Mammary epithelial cell (primary cell): ENCODE measurements at regions of chr3 and their contacts with region 1.

Region 1: DNA sequence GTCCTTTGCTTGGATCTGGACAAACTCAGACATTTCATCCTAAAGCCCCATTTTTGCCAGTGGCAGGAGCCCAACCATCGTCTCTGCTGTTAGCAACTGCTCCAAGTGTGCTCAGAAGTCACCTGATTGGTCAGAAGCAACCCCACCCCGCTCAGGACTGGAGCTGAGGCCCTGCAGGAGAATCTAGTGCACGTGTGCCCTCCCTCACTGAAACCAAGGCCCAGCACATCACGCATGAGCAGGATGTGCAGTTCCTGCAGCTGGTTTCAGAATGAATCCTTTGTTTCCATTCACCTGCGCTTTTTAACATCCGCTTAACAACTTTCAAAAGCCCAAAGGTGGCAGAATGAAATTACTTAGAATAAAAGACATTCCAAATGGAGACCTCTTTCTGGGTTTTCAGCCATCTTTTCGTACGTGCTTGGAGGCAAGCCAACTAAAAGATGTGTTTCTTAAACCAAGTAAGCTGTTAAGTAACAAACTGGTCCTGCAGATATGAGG is 81.2 kb downstream of the SRGAP3 start:
- DNase-seq: peak; percentile 70
- H3K4me3 ChIP-seq: no peak overlapping the region
- H3K27ac ChIP-seq: peak overlapping the region; percentile 96
- H3K4me1 ChIP-seq: peaks cover 56% of the 10 kb centered on the region
- H3K27me3 ChIP-seq: no peaks in the 10 kb centered on the region
- CTCF ChIP-seq: no peak

Region 2: GRCh38 chr3:8524249-8524648 is 644.0 kb before region 1 on chr3:
- CTCF ChIA-PET with region 1: no interaction called
- dilution Hi-C with region 1: no loop called
- in situ Hi-C with region 1: no loop called
- intact Hi-C with region 1: no loop called
- DNase-seq: peak; percentile 36
- H3K4me3 ChIP-seq: no peak overlapping the region
- H3K27ac ChIP-seq: no peak overlapping the region
- H3K4me1 ChIP-seq: peaks cover 9% of the 10 kb centered on the region
- H3K27me3 ChIP-seq: no peaks in the 10 kb centered on the region
- CTCF ChIP-seq: no peak

Region 3: DNA sequence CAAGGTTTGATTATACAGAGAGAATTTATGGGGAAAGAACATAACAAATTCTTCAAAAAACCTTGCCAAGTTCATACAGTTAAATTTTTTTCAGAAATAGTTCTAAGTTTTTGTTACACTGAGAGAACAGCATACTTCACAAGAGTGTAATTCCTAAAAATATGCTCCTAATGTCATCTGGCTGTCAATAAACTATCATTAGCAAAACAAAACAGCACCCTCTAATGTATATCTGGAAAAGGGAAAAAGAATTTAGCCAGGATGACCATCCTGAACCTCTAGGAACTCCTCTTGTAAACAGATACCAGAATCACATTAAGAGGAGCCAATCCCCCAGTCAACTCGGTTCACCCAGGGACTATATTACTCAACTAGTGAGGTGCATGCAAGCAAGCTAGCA is 268.3 kb before region 1 on chr3:
- CTCF ChIA-PET with region 1: no interaction called
- dilution Hi-C with region 1: no loop called
- in situ Hi-C with region 1: no loop called
- intact Hi-C with region 1: no loop called
- DNase-seq: no peak
- H3K4me3 ChIP-seq: no peak overlapping the region
- H3K27ac ChIP-seq: no peak overlapping the region
- H3K4me1 ChIP-seq: no peaks in the 10 kb centered on the region
- H3K27me3 ChIP-seq: no peaks in the 10 kb centered on the region
- CTCF ChIP-seq: no peak

Region 4: DNA sequence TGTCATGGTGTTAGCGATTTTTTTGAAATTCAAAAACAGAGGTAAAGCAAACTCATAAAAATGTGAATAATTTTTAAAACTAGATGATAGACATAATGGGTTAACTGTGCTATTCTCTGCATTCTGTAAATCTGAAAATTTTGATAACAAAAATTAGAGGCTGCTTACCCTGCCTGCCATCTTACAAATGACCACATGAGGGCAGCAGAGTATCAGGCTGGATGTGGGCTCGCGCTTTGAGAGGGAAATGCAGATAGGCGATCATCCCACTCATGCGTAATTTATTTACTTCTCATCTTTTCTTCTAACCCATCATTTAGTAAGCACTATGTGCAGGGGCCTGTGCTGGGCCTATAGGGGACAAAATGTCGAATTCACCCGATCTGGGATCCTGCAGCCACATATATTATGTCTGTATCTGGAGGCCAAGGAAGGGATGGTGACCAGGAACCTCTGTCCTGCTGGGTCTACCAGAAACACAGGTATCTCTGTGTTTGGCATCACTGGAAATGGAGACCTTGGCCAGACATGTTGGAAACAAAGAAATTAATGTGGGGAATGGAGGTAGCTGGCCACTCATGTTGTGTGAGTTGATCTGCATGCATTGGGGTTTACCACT is 197.2 kb before region 1 on chr3:
- CTCF ChIA-PET with region 1: no interaction called
- dilution Hi-C with region 1: no loop called
- in situ Hi-C with region 1: no loop called
- intact Hi-C with region 1: loop called (anchors 2 kb)
- DNase-seq: peak; percentile 48
- H3K4me3 ChIP-seq: no peak overlapping the region
- H3K27ac ChIP-seq: no peak overlapping the region
- H3K4me1 ChIP-seq: no peaks in the 10 kb centered on the region
- H3K27me3 ChIP-seq: no peaks in the 10 kb centered on the region
- CTCF ChIP-seq: peak; percentile 98 to 99

Region 5: DNA sequence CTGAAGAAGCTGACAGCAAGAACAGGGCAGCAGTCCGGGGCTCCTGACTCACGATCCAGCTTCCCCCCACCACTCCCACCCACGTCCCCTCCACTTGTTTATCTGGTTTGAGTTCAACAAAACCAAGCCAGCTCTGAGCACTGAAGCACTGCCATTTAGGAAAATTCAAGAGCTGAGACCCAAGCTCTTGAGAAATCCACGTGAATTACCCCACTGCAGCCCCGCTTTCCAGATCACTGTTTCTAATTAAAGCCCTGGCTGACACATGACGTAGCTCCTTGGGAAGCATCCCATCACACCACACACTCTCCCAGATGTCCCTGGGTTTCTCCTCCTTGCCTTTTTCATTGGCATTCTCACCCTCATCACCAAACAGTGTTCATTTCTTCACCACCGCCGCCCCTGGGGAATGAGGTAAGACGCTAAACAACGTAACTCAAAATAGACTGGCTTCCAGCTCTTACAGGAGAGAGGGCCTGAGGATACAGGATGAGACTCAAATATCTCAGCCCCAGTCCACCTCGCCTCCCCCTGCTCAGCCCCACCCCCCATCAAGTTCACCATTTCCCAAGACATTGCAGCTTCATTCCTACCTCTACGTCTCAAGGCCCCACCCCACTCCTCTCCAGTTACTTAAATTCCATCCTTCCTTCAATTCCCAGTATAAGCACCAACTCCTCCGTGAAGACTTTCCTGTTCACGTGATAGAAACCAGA is 14.2 kb before region 1 on chr3:
- CTCF ChIA-PET with region 1: no interaction called
- dilution Hi-C with region 1: no loop called
- in situ Hi-C with region 1: no loop called
- intact Hi-C with region 1: loop called (anchors 1 kb)
- DNase-seq: no peak
- H3K4me3 ChIP-seq: no peak overlapping the region
- H3K27ac ChIP-seq: no peak overlapping the region
- H3K4me1 ChIP-seq: peaks cover 30% of the 10 kb centered on the region
- H3K27me3 ChIP-seq: no peaks in the 10 kb centered on the region
- CTCF ChIP-seq: no peak

Region 6: DNA sequence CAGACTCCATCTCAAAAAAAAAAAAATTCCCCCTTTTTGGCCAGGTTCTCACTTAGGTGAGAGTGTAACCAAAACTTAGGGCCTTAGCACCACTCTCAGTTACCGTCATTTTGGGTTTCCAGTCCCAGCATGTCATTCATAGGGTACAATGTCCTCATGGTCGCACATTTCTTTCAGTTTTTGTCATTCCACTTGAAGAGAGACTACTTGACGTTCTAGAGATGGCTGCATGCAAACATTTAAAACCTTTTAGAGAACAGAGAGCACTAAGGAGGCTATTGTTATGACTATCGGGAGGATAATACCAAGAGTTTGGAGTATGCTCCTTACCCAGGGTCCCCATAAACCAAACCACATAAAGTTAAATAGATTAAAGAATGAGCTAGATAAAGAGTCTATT is 156.7 kb after region 1 on chr3:
- CTCF ChIA-PET with region 1: no interaction called
- dilution Hi-C with region 1: no loop called
- in situ Hi-C with region 1: no loop called
- intact Hi-C with region 1: no loop called
- DNase-seq: no peak
- H3K4me3 ChIP-seq: no peak overlapping the region
- H3K27ac ChIP-seq: no peak overlapping the region
- H3K4me1 ChIP-seq: no peaks in the 10 kb centered on the region
- H3K27me3 ChIP-seq: no peaks in the 10 kb centered on the region
- CTCF ChIP-seq: no peak